Heart left ventricle (tissue), 16 donors: ENCODE measurements at regions of chr2 and their contacts with region 1.

Region 1: GRCh38 chr2:142682528-142682927 is 194.9 kb upstream of the KYNU start:
- DNase-seq: no peak
- ATAC-seq: no peak
- H3K4me3 ChIP-seq: no peak overlapping the region
- H3K27ac ChIP-seq: no peak overlapping the region
- H3K4me1 ChIP-seq: no peaks in the 10 kb centered on the region
- H3K27me3 ChIP-seq: no peaks in the 10 kb centered on the region
- CTCF ChIP-seq: peak in 5 of 12 donors; percentile 4 to 44 (median 30)
- POLR2A ChIP-seq: no peak

Region 2: DNA sequence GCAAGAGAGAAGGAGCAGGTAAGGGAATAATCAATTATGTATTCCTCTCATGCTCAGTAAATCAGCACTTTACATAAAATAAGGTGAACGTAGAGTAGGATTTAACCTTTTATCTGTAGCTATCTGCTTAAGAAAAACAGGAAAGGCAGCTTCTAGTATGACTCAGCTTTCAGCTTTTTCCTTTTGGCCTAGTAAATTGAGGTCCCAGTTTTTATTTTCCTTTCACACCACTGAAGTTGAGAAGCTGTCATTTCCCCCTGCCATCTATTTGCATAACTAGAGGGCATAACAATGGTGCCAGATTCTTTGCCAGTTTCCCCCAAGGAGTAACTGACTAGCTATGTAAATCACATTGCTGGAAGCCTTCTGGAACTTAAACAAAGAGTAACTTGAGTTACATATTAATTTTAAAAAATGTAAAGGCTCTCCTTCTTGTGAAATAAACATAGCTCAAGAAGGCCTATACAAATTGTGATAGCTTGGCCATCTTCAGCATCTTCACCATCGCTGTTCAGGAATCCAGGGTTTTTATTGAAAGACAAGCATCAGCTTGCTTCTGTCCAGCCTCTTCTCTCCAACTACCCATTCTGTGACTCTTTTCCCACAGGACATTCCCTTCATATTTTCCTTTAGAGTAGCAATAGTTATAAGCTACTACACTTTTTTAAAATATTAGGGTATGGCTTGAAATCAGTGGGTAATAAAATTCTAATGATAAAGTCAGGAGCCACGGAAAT is 291.9 kb after region 1 on chr2:
- intact Hi-C with region 1: loop called in 2 of 10 experiments (anchors 5 kb)
- DNase-seq: no peak
- ATAC-seq: no peak
- H3K4me3 ChIP-seq: no peak overlapping the region
- H3K27ac ChIP-seq: no peak overlapping the region
- H3K4me1 ChIP-seq: peaks cover 0 to 5% (median 0%) of the 10 kb centered on the region in 12 donors
- H3K27me3 ChIP-seq: no peaks in the 10 kb centered on the region
- CTCF ChIP-seq: no peak
- POLR2A ChIP-seq: no peak

Region 3: GRCh38 chr2:142980561-142981378 is 298.2 kb after region 1 on chr2:
- intact Hi-C with region 1: loop called in 9 of 10 experiments (anchors 5 to 10 kb)
- DNase-seq: no peak
- ATAC-seq: no peak
- H3K4me3 ChIP-seq: no peak overlapping the region
- H3K27ac ChIP-seq: no peak overlapping the region
- H3K4me1 ChIP-seq: no peaks in the 10 kb centered on the region
- H3K27me3 ChIP-seq: no peaks in the 10 kb centered on the region
- CTCF ChIP-seq: peak; percentile 43 to 73 (median 58)
- POLR2A ChIP-seq: no peak

Region 4: GRCh38 chr2:142989273-142990204 is 307.0 kb after region 1 on chr2:
- intact Hi-C with region 1: loop called in 7 of 10 experiments (anchors 5 to 10 kb)
- DNase-seq: no peak
- ATAC-seq: no peak
- H3K4me3 ChIP-seq: no peak overlapping the region
- H3K27ac ChIP-seq: no peak overlapping the region
- H3K4me1 ChIP-seq: peaks cover 0 to 4% (median 0%) of the 10 kb centered on the region in 12 donors
- H3K27me3 ChIP-seq: peaks cover 0 to 3% (median 0%) of the 10 kb centered on the region in 9 donors
- CTCF ChIP-seq: peak; percentile 36 to 75 (median 52)
- POLR2A ChIP-seq: no peak